ENCODE measurements at regions of chr2 and their contacts with region 1.

Region 1: DNA sequence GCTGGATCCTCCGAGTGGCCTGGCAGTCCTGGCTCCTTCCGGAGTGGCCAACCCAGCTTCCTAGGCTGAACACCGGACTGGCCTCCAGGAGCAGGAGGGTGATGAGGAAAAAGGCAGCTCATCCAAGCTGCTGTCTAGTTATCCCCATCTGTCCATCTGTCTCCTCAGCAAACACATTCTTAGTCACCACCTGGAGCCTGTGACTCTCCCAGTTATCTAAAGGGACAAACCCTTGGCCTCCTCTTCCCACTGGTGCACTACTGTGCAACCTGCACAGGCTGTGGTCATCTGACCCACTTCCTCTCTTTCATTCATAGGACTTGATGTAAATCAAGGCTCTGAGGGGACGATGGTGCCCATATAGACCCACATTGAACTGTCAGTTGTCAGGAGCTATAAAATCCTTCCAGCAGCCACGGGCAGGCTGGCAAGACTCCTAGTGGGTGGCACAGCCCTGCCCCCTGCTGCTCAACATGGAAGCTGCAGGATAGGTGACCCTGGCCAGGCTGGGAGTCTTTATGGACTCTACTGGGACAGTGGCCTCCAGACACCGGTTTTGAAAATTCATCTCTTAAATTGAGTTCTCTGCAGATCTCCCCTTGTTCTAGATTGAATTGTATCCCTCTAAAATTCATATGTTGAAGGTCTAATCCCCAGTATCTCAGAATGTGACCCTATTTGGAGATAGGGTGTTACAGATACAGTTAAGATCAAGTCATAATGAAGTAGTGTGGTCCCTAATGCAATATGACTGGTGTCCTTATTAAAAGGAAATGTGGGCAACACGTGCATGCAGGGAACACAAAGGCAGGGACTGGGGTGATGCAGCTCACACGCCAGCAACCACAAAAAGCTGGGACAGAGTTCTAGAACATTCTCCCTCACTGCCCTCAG is 29.3 kb upstream of the DUSP2 start:
- DNase-seq: peak; percentile 88
- ATAC-seq: peak; percentile 98
- H3K4me3 Mint-ChIP-seq: no peak overlapping the region
- H3K27ac Mint-ChIP-seq: no peak overlapping the region
- H3K4me1 Mint-ChIP-seq: peaks cover 6% of the 10 kb centered on the region
- H3K27me3 Mint-ChIP-seq: peaks cover 7% of the 10 kb centered on the region

Region 2: DNA sequence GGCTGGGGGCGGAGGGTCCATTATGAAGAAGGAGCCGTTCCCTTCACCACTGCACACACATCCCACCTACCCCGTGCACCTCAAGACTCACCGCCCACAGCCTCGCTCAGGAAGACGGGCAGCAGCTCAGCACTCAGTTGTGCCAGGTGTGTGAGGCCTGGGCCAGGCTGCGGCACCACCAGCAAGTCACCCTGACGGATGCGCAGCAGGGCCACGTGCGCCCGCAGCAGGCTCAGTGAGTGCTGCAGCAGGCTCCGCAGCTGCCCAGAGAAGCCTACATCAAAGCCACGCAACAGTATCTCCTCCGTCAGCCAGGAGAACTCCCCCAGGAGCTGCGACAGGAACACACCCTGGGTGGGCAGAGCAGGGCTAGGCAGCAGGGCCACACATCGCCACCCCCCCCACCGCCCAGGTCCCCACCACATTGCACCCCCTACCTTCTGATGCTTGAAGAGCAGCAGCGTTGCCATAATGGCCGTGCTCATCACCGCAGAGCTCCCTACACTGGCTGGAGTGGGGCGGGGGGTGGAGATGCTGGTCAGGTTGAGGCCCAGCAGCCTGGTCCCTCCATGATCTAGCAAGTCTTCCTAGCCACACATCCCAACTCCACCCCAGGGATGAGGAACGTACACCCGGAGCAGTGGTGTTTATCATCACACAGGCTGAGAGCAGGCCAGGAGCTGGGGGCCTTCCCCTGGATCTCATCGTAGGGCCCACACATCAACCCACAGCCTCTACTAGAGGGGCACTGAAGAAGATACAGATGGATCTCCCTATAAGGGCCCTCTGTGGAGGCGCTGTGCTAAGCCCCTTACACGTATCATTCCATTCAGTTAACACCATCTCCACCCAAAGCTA is 149.9 kb before region 1 on chr2:
- CTCF ChIA-PET with region 1: interaction called, 29 read pairs
- POLR2A ChIA-PET with region 1: no interaction called
- DNase-seq: no peak
- ATAC-seq: no peak
- H3K4me3 Mint-ChIP-seq: no peak overlapping the region
- H3K27ac Mint-ChIP-seq: no peak overlapping the region
- H3K4me1 Mint-ChIP-seq: peaks cover 2% of the 10 kb centered on the region
- H3K27me3 Mint-ChIP-seq: no peaks in the 10 kb centered on the region

Region 3: GRCh38 chr2:96131152-96131812 is 43.2 kb before region 1 on chr2:
- CTCF ChIA-PET with region 1: interaction called, 674 read pairs
- POLR2A ChIA-PET with region 1: no interaction called
- DNase-seq: no peak
- ATAC-seq: no peak
- H3K4me3 Mint-ChIP-seq: no peak overlapping the region
- H3K27ac Mint-ChIP-seq: peak overlapping the region; percentile 68
- H3K4me1 Mint-ChIP-seq: peaks cover 21% of the 10 kb centered on the region
- H3K27me3 Mint-ChIP-seq: no peaks in the 10 kb centered on the region

Region 4: DNA sequence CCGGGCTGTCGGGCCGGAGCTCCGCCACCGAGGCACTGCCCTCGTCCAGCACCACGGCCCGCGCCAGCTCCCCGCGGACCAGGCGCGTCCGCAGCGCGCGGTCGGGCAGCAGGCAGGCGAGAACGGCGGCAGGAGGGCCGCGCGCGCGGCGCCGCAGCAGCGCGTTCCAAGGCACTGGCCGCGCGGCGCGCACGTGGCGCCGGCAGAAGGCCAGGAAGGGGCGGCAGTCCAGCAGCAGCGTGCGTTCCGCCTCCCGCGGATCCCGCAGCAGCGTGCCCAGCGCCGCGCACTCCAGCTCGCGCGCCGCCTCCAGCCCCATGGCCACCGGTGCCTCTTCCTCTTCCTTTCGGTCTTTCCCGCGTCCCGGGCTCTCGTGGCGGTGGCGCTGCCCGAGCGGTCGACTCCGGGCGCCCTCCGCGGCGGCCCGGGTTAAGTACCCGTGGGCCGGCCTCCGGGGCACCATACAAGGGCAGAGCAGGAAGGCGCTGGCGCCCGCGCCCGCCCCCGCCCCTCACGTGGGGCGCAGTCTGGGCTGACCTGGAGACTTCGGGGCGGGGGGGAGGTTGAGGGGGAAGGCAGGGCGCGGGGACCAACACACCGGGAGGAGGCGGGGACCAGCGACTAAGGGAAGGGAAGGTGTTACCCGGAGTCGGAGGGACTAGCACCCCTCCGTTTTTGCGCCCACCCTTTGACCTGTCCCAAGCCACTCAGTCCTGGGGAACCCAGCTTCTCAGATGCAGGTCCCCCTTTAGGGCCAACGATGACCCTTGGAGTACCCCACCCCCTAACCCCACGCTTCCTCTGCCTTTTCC is 29.3 kb before region 1 on chr2 and contains the start of gene DUSP2:
- CTCF ChIA-PET with region 1: interaction called, 674 read pairs
- POLR2A ChIA-PET with region 1: interaction called, 17 read pairs
- DNase-seq: peak; percentile 88
- ATAC-seq: peak; percentile 68
- H3K4me3 Mint-ChIP-seq: peak within 1 kb of the TSS; percentile 88
- H3K27ac Mint-ChIP-seq: peak within 1 kb of the TSS; percentile 97
- H3K4me1 Mint-ChIP-seq: peaks cover 65% of the 10 kb centered on the region
- H3K27me3 Mint-ChIP-seq: no peaks in the 10 kb centered on the region
- total RNA-seq, gene DUSP2: 20.3 to 21.2 TPM

Region 5: DNA sequence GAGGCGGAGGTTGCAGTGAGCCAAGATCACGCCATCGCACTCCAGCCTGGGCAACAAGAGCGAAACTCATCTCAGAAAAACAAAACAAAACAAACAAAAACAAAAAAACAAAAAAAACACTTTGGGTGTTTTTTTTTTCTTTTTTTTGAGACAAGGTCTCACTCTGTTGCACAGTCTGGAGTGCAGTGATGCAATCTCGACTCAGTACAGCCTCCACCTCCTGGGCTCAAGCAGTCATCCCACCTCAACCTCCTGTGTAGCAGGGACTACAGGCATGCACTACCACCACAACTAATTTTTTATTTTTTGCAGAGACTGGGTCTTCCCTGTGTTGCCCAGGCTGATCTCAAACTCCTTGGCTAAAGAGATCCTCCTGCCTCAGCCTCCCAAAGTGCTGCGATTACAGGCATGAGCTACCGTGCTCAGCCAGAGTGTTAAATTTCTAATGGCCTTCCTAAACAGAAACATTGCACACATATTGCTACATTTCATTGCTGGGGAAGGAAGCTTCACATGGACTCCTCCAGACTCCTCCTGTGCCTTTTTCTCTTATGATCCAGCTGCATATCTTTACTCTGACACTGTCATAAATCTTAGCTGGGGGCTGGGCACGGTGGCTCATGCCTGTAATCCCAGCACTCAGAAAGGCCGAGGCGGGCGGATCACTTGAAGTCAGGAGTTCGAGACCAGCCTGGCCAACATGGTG is 14.5 kb after region 1 on chr2:
- CTCF ChIA-PET with region 1: interaction called, 27 read pairs
- POLR2A ChIA-PET with region 1: no interaction called
- DNase-seq: no peak
- ATAC-seq: no peak
- H3K4me3 Mint-ChIP-seq: no peak overlapping the region
- H3K27ac Mint-ChIP-seq: no peak overlapping the region
- H3K4me1 Mint-ChIP-seq: peaks cover 16% of the 10 kb centered on the region
- H3K27me3 Mint-ChIP-seq: no peaks in the 10 kb centered on the region

Region 6: GRCh38 chr2:96260404-96261260 is 86.1 kb after region 1 on chr2:
- CTCF ChIA-PET with region 1: interaction called, 13 read pairs
- POLR2A ChIA-PET with region 1: no interaction called
- DNase-seq: peak; percentile 57
- ATAC-seq: peak; percentile 43
- H3K4me3 Mint-ChIP-seq: no peak overlapping the region
- H3K27ac Mint-ChIP-seq: peak overlapping the region; percentile 53
- H3K4me1 Mint-ChIP-seq: peaks cover 72% of the 10 kb centered on the region
- H3K27me3 Mint-ChIP-seq: no peaks in the 10 kb centered on the region

Measured in activated CD8-positive, alpha-beta T cell treated with anti-CD3 and anti-CD28 coated beads, Interleukin-2, amount 10 ng/mL, durations not matched to agents 7 days and 5 days (primary cell).